Left cardiac atrium (tissue), 4 donors: ENCODE measurements at regions of chr2 and their contacts with region 1.

Region 1: GRCh38 chr2:36785179-36785795 is 88.8 kb downstream of the VIT start:
- DNase-seq: peak; percentile 48
- ATAC-seq: peak in 1 of 2 donors; percentile 58

Region 2: GRCh38 chr2:36695746-36696415 is 89.4 kb before region 1 on chr2:
- intact Hi-C with region 1: loop called in 1 of 2 experiments (anchors 10 kb)
- DNase-seq: no peak
- ATAC-seq: peak in 1 of 2 donors; percentile 78